ENCODE measurements at regions of chr17 and their contacts with region 1.

Region 1: GRCh38 chr17:59753522-59754467 is 46.3 kb downstream of the VMP1 start:
- DNase-seq: no peak
- ATAC-seq: peak; percentile 70
- H3K4me3 Mint-ChIP-seq: peak overlapping the region; percentile 52
- H3K27ac Mint-ChIP-seq: peak overlapping the region; percentile 84
- H3K4me1 Mint-ChIP-seq: peaks cover 62% of the 10 kb centered on the region
- H3K27me3 Mint-ChIP-seq: no peaks in the 10 kb centered on the region

Region 2: GRCh38 chr17:59106463-59107305 is 647.1 kb before region 1 on chr17 and contains the start of gene TRIM37:
- CTCF ChIA-PET with region 1: no interaction called
- DNase-seq: peak; percentile 99
- ATAC-seq: peak; percentile 96
- H3K4me3 Mint-ChIP-seq: peak within 1 kb of the TSS; percentile 95
- H3K27ac Mint-ChIP-seq: peak within 1 kb of the TSS; percentile 88
- H3K4me1 Mint-ChIP-seq: peaks cover 55% of the 10 kb centered on the region
- H3K27me3 Mint-ChIP-seq: no peaks in the 10 kb centered on the region
- total RNA-seq, gene TRIM37: 29.3 to 37.7 TPM

Region 3: DNA sequence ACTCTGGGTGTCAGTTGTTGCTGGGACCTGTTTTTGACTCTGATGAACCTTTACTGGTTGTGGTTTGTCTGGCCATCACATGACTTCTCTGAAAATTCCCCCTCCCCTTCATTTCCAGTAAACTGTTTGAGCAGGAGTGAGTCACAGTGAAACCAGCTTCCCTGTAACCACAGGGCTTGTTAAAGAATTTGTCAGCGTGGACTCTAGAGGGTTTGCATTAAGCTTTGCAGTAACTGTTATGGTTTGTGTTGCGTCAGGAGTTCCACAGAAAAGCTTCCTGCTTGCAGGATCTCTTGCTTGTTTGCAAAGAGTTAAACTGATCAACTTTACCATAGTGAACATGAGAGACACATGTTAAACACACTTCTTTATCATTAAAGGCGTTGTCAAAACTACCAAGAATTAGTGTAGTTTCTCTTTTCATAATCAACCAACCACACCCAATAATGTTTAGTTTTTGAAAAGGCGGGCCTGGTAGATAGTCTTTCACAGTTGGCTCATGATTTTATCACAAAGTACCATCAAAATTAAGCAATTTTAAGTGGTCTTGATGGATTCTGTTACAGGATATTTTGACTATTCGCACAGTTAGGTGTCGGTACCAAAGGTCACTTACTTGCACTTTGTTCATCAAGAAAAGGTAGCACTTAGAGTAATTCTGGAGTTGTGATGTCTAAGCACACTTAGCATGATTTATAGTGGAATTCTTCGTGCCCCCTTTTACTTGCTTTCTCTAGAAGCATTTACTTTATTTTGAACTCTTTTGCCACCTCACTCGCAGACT is 32.9 kb after region 1 on chr17:
- CTCF ChIA-PET with region 1: interaction called, 25 read pairs
- DNase-seq: peak; percentile 96
- ATAC-seq: peak; percentile 83
- H3K4me3 Mint-ChIP-seq: peak overlapping the region; percentile 73
- H3K27ac Mint-ChIP-seq: peak overlapping the region; percentile 93
- H3K4me1 Mint-ChIP-seq: peaks cover 64% of the 10 kb centered on the region
- H3K27me3 Mint-ChIP-seq: no peaks in the 10 kb centered on the region

Region 4: GRCh38 chr17:59837308-59838051 is 83.7 kb after region 1 on chr17:
- CTCF ChIA-PET with region 1: interaction called, 22 read pairs
- DNase-seq: peak; percentile 88
- ATAC-seq: peak; percentile 86
- H3K4me3 Mint-ChIP-seq: peak overlapping the region; percentile 95
- H3K27ac Mint-ChIP-seq: peak overlapping the region; percentile 100
- H3K4me1 Mint-ChIP-seq: peaks cover 38% of the 10 kb centered on the region
- H3K27me3 Mint-ChIP-seq: no peaks in the 10 kb centered on the region

Region 5: GRCh38 chr17:59859444-59860025 is 105.7 kb after region 1 on chr17:
- CTCF ChIA-PET with region 1: interaction called, 10 read pairs
- DNase-seq: no peak
- ATAC-seq: no peak
- H3K4me3 Mint-ChIP-seq: no peak overlapping the region
- H3K27ac Mint-ChIP-seq: no peak overlapping the region
- H3K4me1 Mint-ChIP-seq: peaks cover 20% of the 10 kb centered on the region
- H3K27me3 Mint-ChIP-seq: no peaks in the 10 kb centered on the region

Region 6: GRCh38 chr17:60036796-60037612 is 283.2 kb after region 1 on chr17:
- CTCF ChIA-PET with region 1: interaction called, 27 read pairs
- DNase-seq: peak; percentile 79
- ATAC-seq: peak; percentile 95
- H3K4me3 Mint-ChIP-seq: no peak overlapping the region
- H3K27ac Mint-ChIP-seq: peak overlapping the region; percentile 43
- H3K4me1 Mint-ChIP-seq: peaks cover 9% of the 10 kb centered on the region
- H3K27me3 Mint-ChIP-seq: peaks cover 21% of the 10 kb centered on the region

Measured in activated CD8-positive, alpha-beta memory T cell treated with anti-CD3 and anti-CD28 coated beads, Interleukin-2, amount 10 ng/mL, durations not matched to agents 7 days and 5 days (primary cell).